SK-N-SH (cell line): ENCODE measurements at regions of chr1 and their contacts with region 1.

Region 1: GRCh38 chr1:149962123-149962548 is 25.5 kb upstream of the MTMR11 start:
- DNase-seq: peak; percentile 62
- H3K4me3 ChIP-seq: no peak overlapping the region
- H3K27ac ChIP-seq: peak overlapping the region; percentile 17 to 21; a peak in 3 of 4 replicates
- H3K4me1 ChIP-seq: 0 out of 4 replicates have a peak, but pooled peaks cover 0 to 3% of the 10 kb centered on the region in 2 experiments
- H3K27me3 ChIP-seq: no peaks in the 10 kb centered on the region
- CTCF ChIP-seq: peak; percentile 81
- EP300 ChIP-seq: no peak
- RAD21 ChIP-seq: peak; percentile 84

Region 2: GRCh38 chr1:149942207-149942606 is 19.9 kb before region 1 on chr1:
- CTCF ChIA-PET with region 1: interaction called, 30 read pairs
- POLR2A ChIA-PET with region 1: no interaction called
- DNase-seq: peak; percentile 82
- H3K4me3 ChIP-seq: no peak overlapping the region
- H3K27ac ChIP-seq: peak overlapping the region; percentile 4 to 53; a peak in 3 of 4 replicates
- H3K4me1 ChIP-seq: peaks cover 19 to 25% of the 10 kb centered on the region in 2 experiments
- H3K27me3 ChIP-seq: no peaks in the 10 kb centered on the region
- CTCF ChIP-seq: peak; percentile 43
- EP300 ChIP-seq: no peak
- RAD21 ChIP-seq: peak; percentile 63

Region 3: DNA sequence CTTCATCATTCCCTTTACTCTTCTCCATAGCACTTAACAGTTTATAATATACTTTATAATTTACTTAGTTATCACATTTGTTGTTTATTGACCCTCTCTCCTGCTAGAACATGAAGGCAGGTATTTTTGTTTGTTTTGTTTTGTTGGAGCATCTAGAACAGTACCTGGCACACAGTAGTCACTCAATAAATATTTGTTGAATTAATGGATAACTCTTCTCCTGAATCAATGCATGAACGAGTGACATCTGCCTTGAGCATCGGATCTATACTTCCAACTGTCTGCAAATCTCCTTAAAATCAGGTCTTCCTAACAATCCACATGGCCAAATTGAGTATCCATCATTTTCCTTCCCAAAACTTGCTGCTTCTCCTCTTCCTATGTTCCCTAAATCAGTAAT is 10.4 kb after region 1 on chr1:
- CTCF ChIA-PET with region 1: interaction called, 16 read pairs
- POLR2A ChIA-PET with region 1: no interaction called
- DNase-seq: no peak
- H3K4me3 ChIP-seq: no peak overlapping the region
- H3K27ac ChIP-seq: no peak overlapping the region
- H3K4me1 ChIP-seq: no peaks in the 10 kb centered on the region; a peak in 1 of 4 replicates
- H3K27me3 ChIP-seq: no peaks in the 10 kb centered on the region
- CTCF ChIP-seq: no peak
- EP300 ChIP-seq: no peak
- RAD21 ChIP-seq: no peak

Region 4: DNA sequence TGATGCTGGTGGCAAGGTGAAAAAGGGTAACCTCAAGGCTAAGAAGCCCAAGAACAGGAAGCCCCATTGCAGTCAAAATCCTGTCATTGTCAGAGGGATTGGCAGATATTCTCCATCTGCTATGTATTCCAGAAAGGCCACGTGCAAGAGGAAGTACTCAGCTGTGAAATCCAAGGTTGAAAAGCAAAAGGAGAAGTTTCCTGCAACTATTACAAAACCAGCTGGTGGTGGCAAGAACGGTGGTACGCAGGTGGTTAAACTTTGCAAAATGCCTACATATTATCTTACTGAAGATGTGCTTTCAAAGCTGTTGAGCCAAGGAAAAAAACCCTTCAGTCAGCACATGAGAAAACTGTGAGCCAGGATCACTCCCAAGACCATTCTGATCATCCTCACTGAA is 91.8 kb after region 1 on chr1:
- CTCF ChIA-PET with region 1: interaction called, 31 read pairs
- POLR2A ChIA-PET with region 1: no interaction called
- DNase-seq: no peak
- H3K4me3 ChIP-seq: no peak overlapping the region
- H3K27ac ChIP-seq: no peak overlapping the region
- H3K4me1 ChIP-seq: no peaks in the 10 kb centered on the region
- H3K27me3 ChIP-seq: no peaks in the 10 kb centered on the region
- CTCF ChIP-seq: no peak
- EP300 ChIP-seq: no peak
- RAD21 ChIP-seq: no peak

Region 5: GRCh38 chr1:150102986-150103385 is 140.8 kb after region 1 on chr1:
- CTCF ChIA-PET with region 1: interaction called, 11 read pairs
- POLR2A ChIA-PET with region 1: no interaction called
- DNase-seq: no peak
- H3K4me3 ChIP-seq: no peak overlapping the region
- H3K27ac ChIP-seq: no peak overlapping the region
- H3K4me1 ChIP-seq: no peaks in the 10 kb centered on the region
- H3K27me3 ChIP-seq: no peaks in the 10 kb centered on the region
- CTCF ChIP-seq: no peak
- EP300 ChIP-seq: no peak
- RAD21 ChIP-seq: no peak

Region 6: GRCh38 chr1:150168960-150169601 is 206.9 kb after region 1 on chr1:
- CTCF ChIA-PET with region 1: interaction called, 17 read pairs
- POLR2A ChIA-PET with region 1: no interaction called
- DNase-seq: peak; percentile 84
- H3K4me3 ChIP-seq: no peak overlapping the region; a peak in 1 of 4 replicates
- H3K27ac ChIP-seq: no peak overlapping the region
- H3K4me1 ChIP-seq: peaks cover 0 to 3% of the 10 kb centered on the region in 2 experiments; a peak in 2 of 4 replicates
- H3K27me3 ChIP-seq: no peaks in the 10 kb centered on the region
- CTCF ChIP-seq: peak; percentile 93
- EP300 ChIP-seq: no peak
- RAD21 ChIP-seq: peak; percentile 90